Activated B cell treated with CpG ODN at 0.5 μM for 24 hours (primary cell): ENCODE measurements at regions of chr3 and their contacts with region 1.

Region 1: DNA sequence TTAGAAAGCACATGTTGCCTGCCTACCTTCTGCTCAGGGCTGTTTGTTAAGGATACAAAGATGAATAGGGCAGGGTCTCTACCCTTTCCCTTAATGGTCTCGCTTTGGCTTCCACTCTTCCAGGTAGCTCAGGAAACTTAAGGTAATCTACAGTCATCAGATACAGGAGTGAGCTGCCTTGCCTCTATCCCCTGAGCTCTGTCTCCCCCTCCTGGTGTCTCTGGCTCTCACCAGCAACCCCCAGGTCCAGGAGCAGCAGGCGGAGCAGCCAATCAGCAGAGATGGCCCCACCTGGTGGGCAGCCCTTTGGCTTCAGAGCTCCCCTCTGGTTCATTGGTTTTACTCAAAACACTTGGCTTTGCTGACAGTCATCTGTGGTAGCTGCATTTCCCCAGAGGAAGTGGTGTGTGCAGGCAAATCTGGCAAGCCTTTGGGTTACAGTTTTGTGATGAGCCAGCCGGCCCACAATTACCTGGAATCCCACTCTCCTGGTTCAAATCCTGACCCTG is 8.5 kb upstream of the CX3CR1 start:
- DNase-seq: peak; percentile 75
- ATAC-seq: peak; percentile 99
- H3K4me3 Mint-ChIP-seq: no peak overlapping the region
- H3K27ac Mint-ChIP-seq: peak overlapping the region; percentile 6
- H3K4me1 Mint-ChIP-seq: peaks cover 31% of the 10 kb centered on the region
- H3K27me3 Mint-ChIP-seq: peaks cover 4% of the 10 kb centered on the region
- CTCF ChIP-seq: peak; percentile 50

Region 2: GRCh38 chr3:38297947-38298711 is 990.2 kb before region 1 on chr3:
- CTCF ChIA-PET with region 1: no interaction called
- POLR2A ChIA-PET with region 1: no interaction called
- intact Hi-C with region 1: no loop called
- DNase-seq: no peak
- ATAC-seq: no peak
- H3K4me3 Mint-ChIP-seq: no peak overlapping the region
- H3K27ac Mint-ChIP-seq: no peak overlapping the region
- H3K4me1 Mint-ChIP-seq: no peaks in the 10 kb centered on the region
- H3K27me3 Mint-ChIP-seq: peaks cover 14% of the 10 kb centered on the region
- CTCF ChIP-seq: no peak

Region 3: DNA sequence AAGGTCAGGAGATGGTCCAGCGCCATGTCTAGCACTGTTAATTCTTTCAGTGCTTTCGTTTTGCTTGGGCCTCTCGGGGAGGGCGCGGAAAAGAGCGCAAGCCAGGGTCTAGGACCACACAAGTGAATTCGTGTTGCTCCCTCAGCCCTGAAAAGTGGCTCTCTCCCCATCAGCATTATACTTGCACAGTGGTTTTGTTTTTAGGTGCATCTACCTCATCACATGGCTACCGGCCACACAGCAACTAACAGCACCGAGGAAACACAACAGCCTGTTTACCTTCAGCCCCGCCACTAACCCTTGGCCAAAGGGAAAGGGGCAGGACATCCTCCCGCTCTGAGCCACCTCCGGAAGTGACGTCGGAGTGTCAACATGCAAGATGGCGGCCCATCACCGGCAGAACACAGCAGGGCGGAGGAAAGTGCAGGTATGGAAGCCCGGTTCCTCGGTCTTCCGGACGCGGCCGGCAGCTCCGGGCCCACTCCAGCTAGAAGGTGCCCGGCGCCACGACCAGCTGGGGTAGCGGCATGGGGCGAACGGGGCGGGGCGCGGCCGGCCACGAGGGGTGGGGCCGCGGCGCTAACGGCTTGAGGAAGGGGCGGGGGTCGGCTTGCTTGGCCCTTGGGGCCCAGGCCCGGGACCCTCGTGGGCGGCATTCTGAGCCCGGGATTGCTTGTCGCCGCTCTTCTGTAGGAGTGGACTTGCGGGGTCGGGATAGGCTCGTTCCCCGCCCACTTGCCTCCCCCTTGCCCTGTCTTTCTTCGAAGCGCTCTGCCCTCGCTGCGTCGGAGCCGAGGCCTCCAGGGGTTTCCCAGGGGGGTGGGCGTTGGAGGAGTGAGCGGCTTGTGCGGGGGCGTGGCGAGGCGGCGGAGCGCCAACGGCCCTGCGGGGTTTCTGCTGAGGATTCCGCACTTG is 236.4 kb before region 1 on chr3 and contains the starts of genes SCN11A and WDR48:
- CTCF ChIA-PET with region 1: no interaction called
- POLR2A ChIA-PET with region 1: no interaction called
- intact Hi-C with region 1: loop called (anchors 1 kb)
- DNase-seq: peak; percentile 80
- ATAC-seq: peak; percentile 94
- H3K4me3 Mint-ChIP-seq: peak within 1 kb of the TSS; percentile 97
- H3K27ac Mint-ChIP-seq: peak within 1 kb of the TSS; percentile 98
- H3K4me1 Mint-ChIP-seq: peaks cover 39% of the 10 kb centered on the region
- H3K27me3 Mint-ChIP-seq: no peaks in the 10 kb centered on the region
- CTCF ChIP-seq: no peak
- total RNA-seq, gene SCN11A: 0.16 and 0.20 TPM in 2 replicates
- total RNA-seq, gene WDR48: 47.7 and 48.9 TPM in 2 replicates

Region 4: DNA sequence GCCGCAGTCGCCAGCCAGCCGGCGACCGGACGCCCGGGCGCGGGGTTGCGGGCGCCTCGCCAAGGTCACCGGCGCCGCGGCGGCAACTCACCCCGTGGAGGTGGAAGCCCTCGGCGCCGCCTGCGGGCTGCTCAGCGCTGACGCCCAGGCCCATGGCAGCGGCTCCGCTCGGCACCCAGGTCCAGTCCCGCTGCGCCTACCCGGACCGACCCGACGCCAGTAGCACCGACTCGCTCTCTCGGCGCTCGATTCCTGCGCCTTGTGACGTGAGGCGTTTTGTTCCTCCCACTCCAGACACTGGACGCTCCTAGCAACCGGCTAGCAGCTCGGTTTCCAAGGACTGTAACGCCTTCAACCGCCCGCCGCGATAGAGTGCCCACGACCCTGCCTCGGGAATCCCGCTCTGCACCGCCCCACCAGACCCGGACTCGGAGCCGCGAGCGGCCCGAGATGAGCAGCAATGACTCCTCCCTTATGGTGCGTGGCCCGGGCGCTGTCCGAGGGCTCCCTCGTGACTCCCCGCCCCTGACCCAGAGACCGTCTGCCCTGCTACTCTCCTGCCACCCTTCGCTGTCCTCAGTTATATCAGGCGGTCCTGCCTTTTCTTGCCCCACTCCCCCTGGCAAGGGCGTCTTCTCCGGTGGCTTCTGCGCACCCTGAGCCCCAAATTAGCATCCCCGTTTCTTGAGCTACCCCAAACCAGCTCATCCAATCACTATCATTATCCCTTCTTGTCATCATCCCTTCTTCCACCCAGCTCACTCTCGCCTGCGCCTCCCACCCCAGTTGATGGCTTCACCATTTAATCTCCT is 180.8 kb before region 1 on chr3 and contains the starts of genes GORASP1 and TTC21A:
- CTCF ChIA-PET with region 1: interaction called, 19 read pairs
- POLR2A ChIA-PET with region 1: interaction called, 8 read pairs
- intact Hi-C with region 1: loop called (anchors 1 kb)
- DNase-seq: peak; percentile 64
- ATAC-seq: peak; percentile 50
- H3K4me3 Mint-ChIP-seq: peak within 1 kb of the TSS; percentile 98
- H3K27ac Mint-ChIP-seq: peak within 1 kb of the TSS; percentile 91
- H3K4me1 Mint-ChIP-seq: peaks cover 62% of the 10 kb centered on the region
- H3K27me3 Mint-ChIP-seq: no peaks in the 10 kb centered on the region
- CTCF ChIP-seq: no peak
- total RNA-seq, gene GORASP1: 41.6 and 47.8 TPM in 2 replicates
- total RNA-seq, gene TTC21A: 11.4 and 15.9 TPM in 2 replicates

Region 5: GRCh38 chr3:39202094-39202493 is 86.3 kb before region 1 on chr3:
- CTCF ChIA-PET with region 1: interaction called, 585 read pairs
- POLR2A ChIA-PET with region 1: no interaction called
- intact Hi-C with region 1: no loop called
- DNase-seq: no peak
- ATAC-seq: no peak
- H3K4me3 Mint-ChIP-seq: no peak overlapping the region
- H3K27ac Mint-ChIP-seq: no peak overlapping the region
- H3K4me1 Mint-ChIP-seq: no peaks in the 10 kb centered on the region
- H3K27me3 Mint-ChIP-seq: peaks cover 19% of the 10 kb centered on the region
- CTCF ChIP-seq: no peak

Region 6: DNA sequence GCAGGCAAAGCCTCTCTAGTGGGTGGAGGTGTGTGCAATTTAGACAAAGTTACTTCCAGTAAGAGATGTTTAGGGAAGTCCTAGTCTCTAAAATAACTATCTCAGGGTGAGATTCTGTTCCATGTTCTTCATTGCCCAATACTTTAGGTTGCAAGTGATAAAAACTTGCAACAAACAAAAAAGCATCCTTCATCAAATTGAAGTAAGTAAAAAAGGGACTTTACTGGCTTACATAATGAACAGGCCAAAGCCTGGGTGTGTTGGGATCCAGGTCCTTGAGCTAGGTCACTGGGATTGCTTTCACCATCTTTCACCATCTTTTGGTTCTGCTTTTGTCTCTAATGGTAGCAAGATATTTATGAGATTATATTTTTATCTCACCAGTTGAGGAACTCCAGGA is 46.8 kb before region 1 on chr3:
- CTCF ChIA-PET with region 1: interaction called, 5 read pairs
- POLR2A ChIA-PET with region 1: interaction called, 10 read pairs
- intact Hi-C with region 1: no loop called
- DNase-seq: no peak
- ATAC-seq: no peak
- H3K4me3 Mint-ChIP-seq: no peak overlapping the region
- H3K27ac Mint-ChIP-seq: no peak overlapping the region
- H3K4me1 Mint-ChIP-seq: peaks cover 3% of the 10 kb centered on the region
- H3K27me3 Mint-ChIP-seq: peaks cover 6% of the 10 kb centered on the region
- CTCF ChIP-seq: no peak

Region 7: DNA sequence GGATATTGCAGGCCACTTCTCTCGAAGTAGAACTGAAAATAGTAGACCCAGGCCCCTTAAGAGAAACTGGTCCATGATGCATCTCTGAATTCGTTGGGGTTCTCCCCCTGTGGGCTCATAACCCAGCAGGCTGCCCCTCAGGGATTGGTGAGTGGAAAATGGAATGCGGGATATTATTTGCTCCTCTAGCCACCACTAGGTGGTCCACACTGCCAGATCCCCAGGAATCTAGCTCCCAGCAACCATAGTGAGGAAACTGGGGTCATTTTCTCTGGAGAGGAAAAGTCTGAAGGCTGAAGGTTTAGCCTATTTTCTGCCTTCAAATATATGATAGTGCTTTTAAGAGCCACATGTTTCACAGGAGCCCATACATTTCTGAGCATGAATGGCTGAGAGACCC is 15.2 kb before region 1 on chr3:
- CTCF ChIA-PET with region 1: interaction called, 20 read pairs
- POLR2A ChIA-PET with region 1: interaction called, 8 read pairs
- intact Hi-C with region 1: no loop called
- DNase-seq: no peak
- ATAC-seq: no peak
- H3K4me3 Mint-ChIP-seq: no peak overlapping the region
- H3K27ac Mint-ChIP-seq: no peak overlapping the region
- H3K4me1 Mint-ChIP-seq: peaks cover 17% of the 10 kb centered on the region
- H3K27me3 Mint-ChIP-seq: no peaks in the 10 kb centered on the region
- CTCF ChIP-seq: no peak

Region 8: DNA sequence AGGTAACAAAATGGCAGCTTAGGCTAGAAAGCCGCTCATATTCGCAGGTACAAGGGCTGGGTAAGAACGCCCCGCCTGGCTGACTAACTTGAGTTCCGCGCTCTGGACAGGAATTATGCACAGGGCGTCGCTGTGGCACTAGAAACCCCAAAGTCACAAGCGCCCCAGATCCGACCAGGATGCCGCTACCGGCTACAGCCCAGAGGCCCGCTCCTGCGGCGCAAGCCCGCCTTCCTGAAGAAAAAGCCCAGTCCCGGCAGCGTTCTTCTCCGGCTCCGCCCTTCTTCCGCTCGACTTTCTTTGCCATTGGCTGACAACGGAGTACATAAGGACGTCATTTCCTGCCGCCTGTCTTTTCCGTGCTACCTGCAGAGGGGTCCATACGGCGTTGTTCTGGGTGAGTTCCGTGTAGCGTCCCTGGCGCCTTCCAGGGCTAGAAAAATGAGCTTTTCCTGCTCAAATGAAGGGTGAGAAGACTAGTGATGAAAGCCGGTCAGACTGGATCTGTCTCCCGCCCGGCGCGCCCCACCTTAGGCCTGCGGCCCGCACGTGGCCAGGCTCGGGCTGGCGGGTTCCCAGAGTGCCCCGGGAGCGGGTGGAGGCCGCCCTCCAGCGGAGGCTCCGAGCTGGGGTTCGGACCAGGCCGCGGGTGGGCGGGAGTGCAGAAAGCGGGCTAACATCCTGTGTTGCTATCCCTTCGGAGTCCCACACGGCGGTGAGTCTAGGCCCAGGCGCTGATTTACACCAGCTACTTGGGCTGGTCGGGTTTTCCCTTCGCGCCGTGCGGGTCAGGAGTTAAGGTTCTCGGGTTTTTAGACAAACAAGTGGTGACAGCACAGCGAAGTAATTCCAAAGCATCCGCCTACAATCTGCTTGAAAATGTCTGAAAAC is 118.3 kb after region 1 on chr3 and contains the start of gene RPSA:
- CTCF ChIA-PET with region 1: interaction called, 10 read pairs
- POLR2A ChIA-PET with region 1: interaction called, 8 read pairs
- intact Hi-C with region 1: loop called (anchors 1 kb)
- DNase-seq: peak; percentile 80
- ATAC-seq: peak; percentile 90
- H3K4me3 Mint-ChIP-seq: peak within 1 kb of the TSS; percentile 94
- H3K27ac Mint-ChIP-seq: peak within 1 kb of the TSS; percentile 96
- H3K4me1 Mint-ChIP-seq: peaks cover 48% of the 10 kb centered on the region
- H3K27me3 Mint-ChIP-seq: no peaks in the 10 kb centered on the region
- CTCF ChIP-seq: no peak
- total RNA-seq, gene RPSA: 2,697 and 2,952 TPM in 2 replicates